Activated CD4-positive, alpha-beta T cell treated with anti-CD3 and anti-CD28 coated beads, Interleukin-2, amount 10 ng/mL, durations not matched to agents 24 days and 14 days (primary cell): ENCODE measurements at regions of chr12 and their contacts with region 1.

Region 1: DNA sequence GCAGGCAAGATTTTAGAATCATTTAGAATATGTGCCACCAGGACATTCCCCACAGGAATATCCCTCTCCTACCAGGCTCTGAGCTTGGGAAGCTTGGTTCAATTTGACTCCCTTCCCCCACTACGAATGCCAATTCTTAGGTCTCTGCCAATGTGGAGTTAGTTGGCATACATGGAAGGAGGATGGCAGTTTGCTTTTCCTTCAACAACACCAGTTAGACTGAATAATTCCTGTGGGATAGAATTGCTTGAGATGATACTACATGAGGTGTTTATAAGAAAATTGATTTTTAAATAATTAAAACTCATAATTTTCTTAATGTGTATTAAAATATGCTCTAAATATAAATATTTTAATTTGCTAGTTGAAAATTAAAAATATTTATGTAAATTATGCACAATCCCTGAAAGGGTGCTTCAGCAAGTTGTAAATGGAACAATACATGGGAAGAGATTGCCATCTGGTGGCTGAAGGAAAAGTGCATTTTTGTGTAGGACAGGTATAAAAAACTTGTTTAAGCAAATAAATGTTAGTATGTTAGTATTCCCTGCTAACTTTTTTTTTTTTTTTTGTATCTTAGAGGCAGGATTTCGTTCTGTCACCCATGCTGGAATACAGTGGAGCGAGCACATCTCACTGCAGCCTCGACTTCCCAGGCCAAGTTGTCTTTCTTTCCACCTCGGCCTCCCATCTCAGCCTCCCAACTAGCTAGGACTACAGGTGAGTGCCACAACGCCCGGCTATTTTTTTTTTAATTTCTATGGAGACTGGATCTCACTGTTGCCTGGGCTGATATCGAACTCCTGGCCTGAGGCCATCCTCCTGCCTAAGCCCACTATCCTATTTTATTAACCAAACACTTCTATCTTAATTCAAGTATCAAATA is 25.8 kb upstream of the STRAP start:
- DNase-seq: peak; percentile 88
- H3K4me3 Mint-ChIP-seq: no peak overlapping the region
- H3K27ac Mint-ChIP-seq: no peak overlapping the region
- H3K4me1 Mint-ChIP-seq: no peaks in the 10 kb centered on the region
- H3K27me3 Mint-ChIP-seq: peaks cover 28% of the 10 kb centered on the region

Region 2: DNA sequence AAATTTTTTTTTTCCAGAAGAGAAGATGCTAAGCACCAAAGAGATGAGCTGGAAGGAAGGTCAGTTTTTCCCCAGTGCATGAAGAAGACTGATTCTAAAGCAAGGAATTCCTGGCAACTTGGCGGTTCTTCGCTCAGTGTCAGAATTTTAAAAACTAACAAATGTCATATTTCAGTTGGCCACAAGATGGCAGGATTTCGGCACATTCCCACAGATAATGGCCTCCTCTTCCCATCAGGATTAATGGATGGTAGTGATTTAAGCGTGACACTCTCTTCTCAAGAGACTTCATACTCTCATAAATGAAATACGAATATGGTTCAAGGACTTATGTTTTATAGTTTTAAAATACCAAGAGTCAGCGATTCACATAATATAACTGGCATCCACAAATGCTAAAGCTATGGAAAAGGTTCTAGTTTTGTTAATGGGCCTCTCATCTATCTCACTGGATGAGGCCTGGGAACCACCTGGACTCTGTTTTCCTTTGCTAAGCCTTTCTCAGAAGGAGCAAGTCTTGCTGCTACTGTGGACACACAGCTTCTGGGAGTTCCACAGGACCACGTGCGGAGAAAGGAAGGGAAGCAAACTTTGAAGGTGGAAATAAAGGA is 580.1 kb before region 1 on chr12:
- intact Hi-C with region 1: loop called (anchors 5 kb)
- DNase-seq: peak; percentile 65
- H3K4me3 Mint-ChIP-seq: no peak overlapping the region
- H3K27ac Mint-ChIP-seq: no peak overlapping the region
- H3K4me1 Mint-ChIP-seq: peaks cover 5% of the 10 kb centered on the region
- H3K27me3 Mint-ChIP-seq: peaks cover under 1% of the 10 kb centered on the region

Region 3: GRCh38 chr12:15590180-15590826 is 266.0 kb before region 1 on chr12:
- intact Hi-C with region 1: loop called (anchors 1 kb)
- DNase-seq: peak; percentile 85
- H3K4me3 Mint-ChIP-seq: peak overlapping the region; percentile 74
- H3K27ac Mint-ChIP-seq: peak overlapping the region; percentile 39
- H3K4me1 Mint-ChIP-seq: peaks cover 10% of the 10 kb centered on the region
- H3K27me3 Mint-ChIP-seq: peaks cover 5% of the 10 kb centered on the region

Region 4: GRCh38 chr12:15772405-15773018 is 83.8 kb before region 1 on chr12:
- intact Hi-C with region 1: loop called (anchors 5 kb)
- DNase-seq: no peak
- H3K4me3 Mint-ChIP-seq: no peak overlapping the region
- H3K27ac Mint-ChIP-seq: no peak overlapping the region
- H3K4me1 Mint-ChIP-seq: peaks cover 2% of the 10 kb centered on the region
- H3K27me3 Mint-ChIP-seq: peaks cover 15% of the 10 kb centered on the region

Region 5: DNA sequence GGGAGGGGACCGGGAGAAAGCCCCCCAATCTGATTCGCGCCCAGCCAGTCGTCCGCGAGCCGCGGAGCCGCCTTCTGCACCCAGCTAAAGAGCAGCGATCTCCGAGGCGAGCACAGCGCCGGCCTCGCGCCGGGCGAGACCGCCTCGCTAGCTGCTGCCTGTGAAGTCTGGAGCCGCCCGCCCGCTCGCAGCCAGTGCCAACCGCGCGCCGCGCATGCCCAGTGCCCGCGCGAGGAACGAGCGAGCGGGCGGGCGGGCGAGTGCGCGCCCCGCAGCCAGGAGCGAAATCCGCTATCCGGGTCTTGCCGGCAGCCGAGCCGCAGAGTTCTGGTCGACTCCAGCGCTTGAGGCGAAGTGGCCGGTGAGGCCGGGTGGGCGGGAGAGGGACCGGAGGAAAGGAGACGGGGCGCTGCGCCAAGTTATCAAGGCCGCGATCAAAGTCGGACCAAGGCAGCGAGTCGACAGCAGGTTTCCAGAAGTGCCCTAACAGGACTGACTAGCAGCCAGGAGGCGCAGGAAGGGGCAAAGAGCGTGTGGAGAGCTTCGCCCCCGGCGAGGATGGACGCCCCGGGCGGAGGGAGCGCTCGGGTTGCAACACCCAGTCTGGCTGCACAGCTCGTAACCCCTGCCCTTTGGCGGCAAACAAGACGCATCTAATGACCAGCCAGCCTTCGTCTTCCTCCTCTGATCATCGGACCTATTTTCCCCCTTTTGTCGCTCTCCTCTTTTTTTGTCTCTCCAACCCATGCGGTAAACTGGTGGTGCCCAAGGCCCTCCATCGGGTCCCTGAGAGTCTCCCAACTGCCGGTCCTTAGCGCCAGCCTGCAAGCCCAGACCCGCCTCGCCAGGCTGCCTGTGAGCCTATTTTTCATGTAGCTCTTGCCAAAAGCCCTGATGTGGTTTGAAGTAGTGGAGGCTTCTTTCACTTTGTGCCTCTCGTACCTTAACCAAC is 66.8 kb before region 1 on chr12 and contains the start of gene EPS8:
- intact Hi-C with region 1: loop called (anchors 5 kb)
- DNase-seq: peak; percentile 96
- H3K4me3 Mint-ChIP-seq: peak within 1 kb of the TSS; percentile 87
- H3K27ac Mint-ChIP-seq: peak within 1 kb of the TSS; percentile 74
- H3K4me1 Mint-ChIP-seq: peaks cover 12% of the 10 kb centered on the region
- H3K27me3 Mint-ChIP-seq: peaks cover 69% of the 10 kb centered on the region
- total RNA-seq, gene EPS8: 2.2 and 2.4 TPM in 2 replicates